Endothelial cell of umbilical vein (primary cell): ENCODE measurements at regions of chr16 and their contacts with region 1.

Region 1: GRCh38 chr16:2905431-2906387 is 6.0 kb upstream of the FLYWCH1 start:
- DNase-seq: peak; percentile 99
- H3K4me3 ChIP-seq: peak overlapping the region in 2 of 3 experiments; percentile 73 to 78
- H3K27ac ChIP-seq: no peak overlapping the region
- H3K4me1 ChIP-seq: peaks cover 9% of the 10 kb centered on the region
- H3K27me3 ChIP-seq: no peaks in the 10 kb centered on the region
- CTCF ChIP-seq: no peak
- POLR2A ChIP-seq: no peak

Region 2: DNA sequence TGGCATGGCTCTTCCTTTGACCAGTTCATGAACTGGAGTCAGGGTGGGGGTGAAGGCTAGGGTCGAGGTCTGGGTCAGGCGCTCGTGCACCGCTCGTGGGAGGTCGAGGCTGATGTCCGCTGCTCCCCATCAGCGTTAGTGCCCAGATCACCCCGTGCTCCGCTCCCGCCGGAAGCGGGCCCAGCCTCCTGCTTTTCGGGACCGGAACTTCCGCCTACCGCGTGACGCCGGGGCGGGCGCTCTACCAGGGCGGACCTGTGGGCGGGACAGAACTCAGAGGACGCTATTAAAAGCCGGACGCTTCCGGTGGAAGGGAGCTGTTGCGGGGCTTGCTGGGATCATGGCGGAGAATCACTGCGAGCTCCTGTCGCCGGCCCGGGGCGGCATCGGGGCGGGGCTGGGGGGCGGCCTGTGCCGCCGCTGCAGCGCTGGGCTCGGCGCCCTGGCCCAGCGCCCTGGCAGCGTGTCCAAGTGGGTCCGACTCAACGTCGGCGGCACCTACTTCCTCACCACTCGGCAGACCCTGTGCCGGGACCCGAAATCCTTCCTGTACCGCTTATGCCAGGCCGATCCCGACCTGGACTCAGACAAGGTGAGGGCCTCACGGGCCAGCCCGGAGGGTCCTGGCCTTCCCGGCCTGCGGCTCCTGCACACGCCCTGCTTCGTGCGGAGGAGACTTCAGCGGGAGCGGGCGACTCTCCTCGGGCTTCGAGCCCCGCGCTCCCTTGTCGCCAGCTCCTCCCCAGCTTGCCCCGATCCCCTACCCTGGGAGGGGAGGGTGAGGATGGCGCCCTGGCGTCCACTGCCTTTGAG is 223.3 kb before region 1 on chr16 and contains the start of gene KCTD5:
- CTCF ChIA-PET with region 1: no interaction called
- POLR2A ChIA-PET with region 1: no interaction called
- dilution Hi-C with region 1: no loop called
- intact Hi-C with region 1: loop called (anchors 1 kb)
- DNase-seq: peak; percentile 94
- H3K4me3 ChIP-seq: peak within 1 kb of the TSS; percentile 65 to 91 (median 75)
- H3K27ac ChIP-seq: peak within 1 kb of the TSS; percentile 68
- H3K4me1 ChIP-seq: peaks cover 6% of the 10 kb centered on the region
- H3K27me3 ChIP-seq: no peaks in the 10 kb centered on the region
- CTCF ChIP-seq: no peak
- POLR2A ChIP-seq: peak; percentile 99
- total RNA-seq, gene KCTD5: 30.8 and 32.2 TPM in 2 replicates

Region 3: DNA sequence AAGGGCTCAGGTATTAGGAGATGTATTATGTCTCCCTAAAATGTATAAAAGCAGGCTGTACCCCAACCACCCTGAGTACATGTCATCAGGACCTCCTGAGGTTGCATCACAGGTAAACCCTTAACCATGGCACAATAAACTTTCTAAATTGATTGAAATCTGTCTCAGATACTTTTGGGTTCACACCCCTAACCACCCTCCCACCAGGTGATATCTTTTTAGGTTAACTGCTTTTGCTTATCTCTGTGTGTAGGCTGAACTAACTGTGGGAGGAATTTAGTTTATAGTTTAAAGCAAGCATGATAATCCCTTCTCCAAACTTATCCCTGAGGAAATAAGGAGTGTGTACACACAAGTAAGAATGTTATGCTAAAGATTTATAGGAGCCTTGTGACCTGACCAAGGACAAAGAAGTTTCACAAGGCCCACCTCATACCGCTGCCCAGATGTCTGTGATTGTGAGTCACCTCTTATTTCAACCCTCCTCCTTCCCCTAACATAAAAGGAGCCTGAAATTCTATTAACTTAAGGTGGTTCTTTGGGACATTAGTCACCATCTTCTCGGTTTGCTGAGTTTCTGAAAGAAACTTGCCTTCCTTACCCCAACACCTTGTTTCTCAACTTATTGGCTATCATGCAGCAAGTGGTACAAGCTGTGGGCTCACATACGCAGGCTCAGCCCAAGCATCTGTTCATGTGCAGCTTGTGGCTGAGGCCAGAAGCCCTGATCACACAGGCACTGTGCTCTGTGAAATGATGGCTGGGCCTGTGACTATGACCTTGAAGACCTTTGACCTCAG is 59.0 kb before region 1 on chr16:
- CTCF ChIA-PET with region 1: no interaction called
- POLR2A ChIA-PET with region 1: no interaction called
- dilution Hi-C with region 1: no loop called
- intact Hi-C with region 1: no loop called
- DNase-seq: no peak
- H3K4me3 ChIP-seq: no peak overlapping the region
- H3K27ac ChIP-seq: no peak overlapping the region
- H3K4me1 ChIP-seq: peaks cover 10% of the 10 kb centered on the region
- H3K27me3 ChIP-seq: peaks cover 0 to 2% of the 10 kb centered on the region in 2 experiments
- CTCF ChIP-seq: no peak
- POLR2A ChIP-seq: no peak

Region 4: DNA sequence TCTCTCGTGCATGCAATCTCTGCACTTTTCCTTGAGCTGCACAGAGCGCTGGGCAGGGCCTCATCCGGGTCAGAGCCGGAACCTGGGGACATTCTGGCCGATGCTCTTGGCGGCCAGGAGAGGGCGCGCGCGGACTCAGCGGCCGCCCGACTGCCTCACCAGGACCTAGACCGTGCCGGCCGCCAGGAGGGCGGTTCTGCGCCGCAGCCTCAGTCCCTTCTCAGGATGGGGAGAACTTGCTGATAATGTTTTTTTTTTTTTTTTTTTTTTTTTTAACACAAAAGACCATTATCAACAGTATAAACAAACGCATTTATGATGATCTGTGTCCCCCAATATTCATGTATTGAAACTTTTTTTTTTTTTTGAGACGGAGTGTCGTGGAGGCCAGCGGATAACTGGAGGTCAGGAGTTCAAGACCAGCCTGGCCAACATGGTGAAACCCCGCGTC is 30.8 kb before region 1 on chr16:
- CTCF ChIA-PET with region 1: interaction called, 11 read pairs
- POLR2A ChIA-PET with region 1: no interaction called
- dilution Hi-C with region 1: no loop called
- intact Hi-C with region 1: loop called (anchors 2 kb)
- DNase-seq: peak; percentile 63
- H3K4me3 ChIP-seq: no peak overlapping the region
- H3K27ac ChIP-seq: no peak overlapping the region
- H3K4me1 ChIP-seq: no peaks in the 10 kb centered on the region
- H3K27me3 ChIP-seq: peaks cover 0 to 2% of the 10 kb centered on the region in 2 experiments
- CTCF ChIP-seq: peak; percentile 98
- POLR2A ChIP-seq: no peak

Region 5: DNA sequence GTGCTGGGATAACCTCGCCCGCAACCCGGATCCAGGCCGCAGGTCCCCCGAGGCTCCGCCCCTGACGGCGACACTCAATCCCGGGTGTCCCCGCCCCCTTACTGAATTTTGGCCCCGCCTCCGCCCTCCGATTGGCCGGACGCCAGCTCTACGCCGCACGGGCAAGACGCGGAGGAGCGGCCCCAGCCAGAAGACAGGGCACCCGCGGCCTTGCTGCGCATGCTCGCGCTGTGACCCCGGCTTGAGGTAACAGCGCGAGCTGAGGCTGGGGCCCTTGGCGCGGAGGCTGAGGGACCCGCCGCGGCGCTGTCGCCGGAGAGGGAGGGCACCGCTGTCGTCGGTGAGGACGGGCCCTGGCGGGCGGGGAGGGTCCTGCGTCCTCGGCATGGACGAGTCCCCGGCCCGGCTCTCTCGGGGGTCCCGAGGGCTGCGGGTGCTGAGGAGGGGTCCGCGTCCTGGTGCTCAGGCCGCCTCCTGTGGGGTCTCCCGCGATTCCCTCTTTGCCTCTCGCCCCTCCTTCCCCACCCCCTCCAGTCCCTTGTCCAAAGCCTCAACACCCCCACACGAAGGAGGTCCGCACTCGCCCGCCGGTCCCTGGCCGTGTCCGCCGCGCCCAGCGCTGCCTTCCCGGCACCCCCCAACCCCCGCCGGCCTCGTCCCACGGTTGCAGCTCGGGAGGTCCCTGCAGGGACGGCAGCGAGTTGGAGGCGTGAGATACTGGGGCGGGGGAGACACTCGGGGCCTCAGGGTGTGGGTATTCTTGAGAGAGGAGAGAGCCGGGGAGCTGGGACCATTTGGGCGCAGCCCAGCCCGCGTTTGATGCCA is 22.5 kb before region 1 on chr16 and contains the start of gene FLYWCH2:
- CTCF ChIA-PET with region 1: interaction called, 20 read pairs
- POLR2A ChIA-PET with region 1: interaction called, 6 read pairs
- dilution Hi-C with region 1: no loop called
- intact Hi-C with region 1: loop called (anchors 1 kb)
- DNase-seq: peak; percentile 99
- H3K4me3 ChIP-seq: peak within 1 kb of the TSS; percentile 42 to 91 (median 63)
- H3K27ac ChIP-seq: peak within 1 kb of the TSS; percentile 49
- H3K4me1 ChIP-seq: peaks cover 7% of the 10 kb centered on the region
- H3K27me3 ChIP-seq: no peaks in the 10 kb centered on the region
- CTCF ChIP-seq: no peak
- POLR2A ChIP-seq: peak; percentile 83
- total RNA-seq, gene FLYWCH2: 18.3 and 24.1 TPM in 2 replicates

Region 6: GRCh38 chr16:2919511-2920255 is 14.0 kb after region 1 on chr16:
- CTCF ChIA-PET with region 1: interaction called, 19 read pairs
- POLR2A ChIA-PET with region 1: interaction called, 3 read pairs
- dilution Hi-C with region 1: no loop called
- intact Hi-C with region 1: loop called (anchors 1 kb)
- DNase-seq: peak; percentile 74
- H3K4me3 ChIP-seq: no peak overlapping the region
- H3K27ac ChIP-seq: no peak overlapping the region
- H3K4me1 ChIP-seq: peaks cover 16% of the 10 kb centered on the region
- H3K27me3 ChIP-seq: no peaks in the 10 kb centered on the region
- CTCF ChIP-seq: peak; percentile 64 to 80
- POLR2A ChIP-seq: no peak

Region 7: DNA sequence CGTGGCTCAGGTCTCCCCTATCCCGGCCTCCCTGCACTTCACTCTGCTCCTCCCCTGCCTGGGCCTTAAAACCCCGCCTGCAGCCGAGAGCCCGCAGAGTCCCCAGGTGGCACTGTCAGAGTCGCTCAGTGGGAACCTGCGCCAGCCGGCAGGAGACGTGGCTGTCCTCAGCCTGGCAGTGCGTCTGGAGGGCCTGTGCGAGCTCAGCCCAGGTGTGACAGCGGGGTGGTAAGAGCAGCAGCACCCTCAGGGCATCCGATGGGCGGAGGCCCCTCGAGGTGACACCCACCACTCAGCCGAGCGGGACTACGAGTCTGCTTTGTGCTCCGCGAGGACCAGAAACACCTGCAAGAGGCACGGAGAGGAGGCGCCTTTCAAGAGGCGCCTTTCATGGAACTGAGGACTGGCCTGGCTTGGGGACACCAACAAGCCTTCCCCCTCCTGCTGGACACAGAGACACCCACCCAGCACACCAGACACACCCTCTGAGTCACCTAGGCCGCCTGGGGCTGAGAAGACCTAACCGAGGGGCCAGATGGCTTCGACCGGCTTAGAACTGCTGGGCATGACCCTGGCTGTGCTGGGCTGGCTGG is 107.2 kb after region 1 on chr16 and contains the start of gene CLDN9:
- CTCF ChIA-PET with region 1: no interaction called
- POLR2A ChIA-PET with region 1: no interaction called
- dilution Hi-C with region 1: no loop called
- intact Hi-C with region 1: no loop called
- DNase-seq: no peak
- H3K4me3 ChIP-seq: no peak within 1 kb of the TSS
- H3K27ac ChIP-seq: no peak within 1 kb of the TSS
- H3K4me1 ChIP-seq: peaks cover 8% of the 10 kb centered on the region
- H3K27me3 ChIP-seq: peaks cover 21 to 22% of the 10 kb centered on the region in 2 experiments
- CTCF ChIP-seq: no peak
- POLR2A ChIP-seq: no peak
- total RNA-seq, gene CLDN9: not detected in 2 replicates

Region 8: GRCh38 chr16:3023669-3024478 is 118.2 kb after region 1 on chr16 and contains the starts of genes HCFC1R1 and THOC6:
- CTCF ChIA-PET with region 1: no interaction called
- POLR2A ChIA-PET with region 1: no interaction called
- dilution Hi-C with region 1: no loop called
- intact Hi-C with region 1: loop called (anchors 2 kb)
- DNase-seq: peak; percentile 98
- H3K4me3 ChIP-seq: peak within 1 kb of the TSS; percentile 0 to 61 (median 53)
- H3K27ac ChIP-seq: peak within 1 kb of the TSS; percentile 98
- H3K4me1 ChIP-seq: peaks cover 18% of the 10 kb centered on the region
- H3K27me3 ChIP-seq: peaks cover under 1 to 2% of the 10 kb centered on the region in 2 experiments
- CTCF ChIP-seq: no peak
- POLR2A ChIP-seq: peak; percentile 62
- total RNA-seq, gene HCFC1R1: 25.8 and 28.7 TPM in 2 replicates
- total RNA-seq, gene THOC6: 23.9 and 24.1 TPM in 2 replicates